BJ (cell line): ENCODE measurements at regions of chr20 and their contacts with region 1.

Region 1: GRCh38 chr20:61234803-61235113 is 17.3 kb upstream of the CDH4 start:
- DNase-seq: no peak
- H3K4me3 ChIP-seq: no peak overlapping the region
- H3K27me3 ChIP-seq: no peaks in the 10 kb centered on the region
- CTCF ChIP-seq: no peak

Region 2: GRCh38 chr20:61253264-61253639 is 18.5 kb after region 1 on chr20:
- CTCF ChIA-PET with region 1: interaction called, 12 read pairs
- POLR2A ChIA-PET with region 1: no interaction called
- DNase-seq: no peak
- H3K4me3 ChIP-seq: peak overlapping the region; percentile 50
- H3K27me3 ChIP-seq: peaks cover 17% of the 10 kb centered on the region
- CTCF ChIP-seq: peak; percentile 42